MCF 10A (cell line): ENCODE measurements at regions of chr12 and their contacts with region 1.

Region 1: DNA sequence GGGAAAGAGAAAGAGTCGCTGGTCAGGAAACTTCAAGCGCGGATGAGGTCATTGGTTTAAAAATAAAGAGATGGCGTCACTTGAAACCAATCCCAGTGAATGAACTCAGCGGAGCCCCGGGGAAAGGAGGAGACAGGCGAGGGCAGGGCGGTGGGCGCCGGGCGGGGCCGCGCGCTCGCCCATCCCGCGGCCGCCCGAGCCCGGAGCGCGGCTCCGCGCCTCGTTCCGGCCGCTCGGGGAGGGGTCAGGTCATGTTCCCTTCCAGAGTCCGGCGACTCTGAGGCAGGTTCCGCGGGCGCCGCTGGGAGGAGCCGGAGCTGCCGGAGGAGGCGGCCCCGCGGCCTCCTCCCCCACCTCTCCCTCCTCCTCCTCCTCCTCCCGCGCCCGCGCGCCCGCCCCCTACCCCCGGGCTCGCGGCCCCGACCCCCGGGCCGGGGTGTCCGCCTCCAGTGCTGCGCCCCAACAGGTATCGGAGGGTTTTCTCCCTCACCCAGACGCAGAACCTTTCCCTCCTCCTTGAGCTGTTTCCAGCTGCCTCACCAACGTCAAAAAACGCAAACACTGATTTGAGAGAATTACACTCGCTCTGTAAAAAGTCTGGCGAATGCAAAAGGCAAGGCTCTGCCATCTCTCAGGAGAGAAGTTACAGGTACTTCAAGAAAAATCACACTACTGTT is at the start of gene DUSP16:
- DNase-seq: peak; percentile 94
- H3K4me3 Mint-ChIP-seq: peak within 1 kb of the TSS; percentile 69
- H3K27ac Mint-ChIP-seq: peak within 1 kb of the TSS; percentile 95
- H3K4me1 Mint-ChIP-seq: peaks cover 28% of the 10 kb centered on the region
- H3K27me3 Mint-ChIP-seq: no peaks in the 10 kb centered on the region
- CTCF ChIP-seq: no peak
- total RNA-seq, gene DUSP16: 18.9 and 20.7 TPM in 2 replicates

Region 2: DNA sequence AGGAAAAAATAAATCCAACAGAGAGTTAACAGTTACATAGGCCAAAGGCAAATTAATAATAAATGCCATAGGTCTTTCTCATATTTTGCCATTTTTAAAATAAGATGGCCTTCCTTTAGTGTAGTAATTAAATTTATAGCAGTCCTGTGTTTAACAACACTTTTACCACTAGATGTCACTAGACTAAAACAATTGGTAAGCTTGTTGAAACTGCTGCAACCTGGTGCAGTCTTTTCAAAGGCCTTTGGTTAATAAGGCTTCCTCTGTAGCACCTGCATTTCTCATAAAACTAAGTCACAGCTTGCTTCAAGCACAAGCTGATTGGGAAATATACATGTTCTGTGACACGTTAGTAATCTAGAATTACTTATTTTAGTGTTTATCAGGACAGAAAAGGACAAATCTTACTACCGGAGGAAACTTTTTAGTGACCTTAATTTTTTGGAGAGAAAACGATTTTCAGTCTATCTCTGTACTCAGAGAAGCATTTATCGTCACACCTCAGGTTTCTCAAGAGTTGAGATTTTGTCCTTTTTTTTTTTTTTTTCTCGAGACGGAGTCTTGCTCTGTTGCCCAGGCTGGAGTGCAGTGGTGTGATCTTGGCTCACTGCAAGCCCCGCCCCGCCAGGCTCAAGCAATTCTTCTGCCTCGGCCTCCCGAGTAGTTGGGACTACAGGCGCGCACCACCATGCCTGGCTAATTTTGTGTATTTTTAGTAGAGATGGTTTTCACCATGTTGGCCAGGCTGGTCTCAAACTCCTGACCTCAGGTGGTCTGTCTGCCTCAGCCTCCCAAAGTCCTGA is 185.9 kb before region 1 on chr12:
- CTCF ChIA-PET with region 1: interaction called, 20 read pairs
- POLR2A ChIA-PET with region 1: interaction called, 14 read pairs
- intact Hi-C with region 1: loop called (anchors 1 kb)
- DNase-seq: peak; percentile 76
- H3K4me3 Mint-ChIP-seq: no peak overlapping the region
- H3K27ac Mint-ChIP-seq: no peak overlapping the region
- H3K4me1 Mint-ChIP-seq: no peaks in the 10 kb centered on the region
- H3K27me3 Mint-ChIP-seq: no peaks in the 10 kb centered on the region
- CTCF ChIP-seq: peak; percentile 57

Region 3: DNA sequence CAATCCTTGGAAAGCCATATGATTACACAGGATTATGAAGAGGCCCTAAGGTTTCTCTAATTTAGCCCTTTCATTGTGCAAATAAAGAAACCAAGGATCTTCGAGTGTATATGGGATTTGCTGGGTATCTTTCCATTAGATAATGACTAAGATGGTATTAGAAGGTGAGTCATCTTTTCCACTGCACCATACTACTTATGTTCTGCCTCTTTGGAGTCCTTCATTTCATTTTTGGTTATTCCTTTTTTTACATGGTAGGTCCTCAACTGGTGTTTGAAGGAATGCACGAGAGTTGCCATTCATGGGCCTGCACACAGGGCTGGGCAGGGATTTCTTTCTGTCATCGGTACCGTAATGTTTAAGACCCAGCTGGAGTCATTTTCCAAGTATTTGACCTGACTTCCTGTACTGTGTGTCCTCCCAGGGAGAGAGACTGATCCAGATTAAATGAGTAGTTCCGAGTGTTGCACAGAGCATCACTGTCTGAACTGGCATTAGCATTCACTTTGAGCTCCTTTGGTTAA is 120.1 kb before region 1 on chr12:
- CTCF ChIA-PET with region 1: interaction called, 3 read pairs
- POLR2A ChIA-PET with region 1: interaction called, 10 read pairs
- intact Hi-C with region 1: no loop called
- DNase-seq: no peak
- H3K4me3 Mint-ChIP-seq: no peak overlapping the region
- H3K27ac Mint-ChIP-seq: no peak overlapping the region
- H3K4me1 Mint-ChIP-seq: peaks cover 23% of the 10 kb centered on the region
- H3K27me3 Mint-ChIP-seq: no peaks in the 10 kb centered on the region
- CTCF ChIP-seq: no peak

Region 4: GRCh38 chr12:12611512-12612306 is 49.0 kb after region 1 on chr12 and contains the start of gene CREBL2:
- CTCF ChIA-PET with region 1: interaction called, 12 read pairs
- POLR2A ChIA-PET with region 1: interaction called, 10 read pairs
- intact Hi-C with region 1: loop called (anchors 2 kb)
- DNase-seq: peak; percentile 92
- H3K4me3 Mint-ChIP-seq: peak within 1 kb of the TSS; percentile 95
- H3K27ac Mint-ChIP-seq: peak within 1 kb of the TSS; percentile 98
- H3K4me1 Mint-ChIP-seq: peaks cover 26% of the 10 kb centered on the region
- H3K27me3 Mint-ChIP-seq: no peaks in the 10 kb centered on the region
- CTCF ChIP-seq: no peak
- total RNA-seq, gene CREBL2: 17.4 and 22.5 TPM in 2 replicates

Region 5: GRCh38 chr12:12661086-12661485 is 98.4 kb after region 1 on chr12:
- CTCF ChIA-PET with region 1: interaction called, 3 read pairs
- POLR2A ChIA-PET with region 1: interaction called, 6 read pairs
- intact Hi-C with region 1: loop called (anchors 2 kb)
- DNase-seq: peak; percentile 81
- H3K4me3 Mint-ChIP-seq: peak overlapping the region; percentile 46
- H3K27ac Mint-ChIP-seq: peak overlapping the region; percentile 51
- H3K4me1 Mint-ChIP-seq: peaks cover 24% of the 10 kb centered on the region
- H3K27me3 Mint-ChIP-seq: no peaks in the 10 kb centered on the region
- CTCF ChIP-seq: no peak

Region 6: DNA sequence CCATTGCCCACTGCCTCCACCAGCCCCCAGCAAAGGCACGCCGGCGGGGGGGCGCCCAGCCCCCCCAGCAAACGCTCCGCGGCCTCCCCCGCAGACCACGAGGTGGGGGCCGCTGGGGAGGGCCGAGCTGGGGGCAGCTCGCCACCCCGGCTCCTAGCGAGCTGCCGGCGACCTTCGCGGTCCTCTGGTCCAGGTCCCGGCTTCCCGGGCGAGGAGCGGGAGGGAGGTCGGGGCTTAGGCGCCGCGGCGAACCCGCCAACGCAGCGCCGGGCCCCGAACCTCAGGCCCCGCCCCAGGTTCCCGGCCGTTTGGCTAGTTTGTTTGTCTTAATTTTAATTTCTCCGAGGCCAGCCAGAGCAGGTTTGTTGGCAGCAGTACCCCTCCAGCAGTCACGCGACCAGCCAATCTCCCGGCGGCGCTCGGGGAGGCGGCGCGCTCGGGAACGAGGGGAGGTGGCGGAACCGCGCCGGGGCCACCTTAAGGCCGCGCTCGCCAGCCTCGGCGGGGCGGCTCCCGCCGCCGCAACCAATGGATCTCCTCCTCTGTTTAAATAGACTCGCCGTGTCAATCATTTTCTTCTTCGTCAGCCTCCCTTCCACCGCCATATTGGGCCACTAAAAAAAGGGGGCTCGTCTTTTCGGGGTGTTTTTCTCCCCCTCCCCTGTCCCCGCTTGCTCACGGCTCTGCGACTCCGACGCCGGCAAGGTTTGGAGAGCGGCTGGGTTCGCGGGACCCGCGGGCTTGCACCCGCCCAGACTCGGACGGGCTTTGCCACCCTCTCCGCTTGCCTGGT is 154.3 kb after region 1 on chr12 and contains the start of gene CDKN1B:
- CTCF ChIA-PET with region 1: interaction called, 3 read pairs
- POLR2A ChIA-PET with region 1: interaction called, 41 read pairs
- intact Hi-C with region 1: no loop called
- DNase-seq: peak; percentile 96
- H3K4me3 Mint-ChIP-seq: peak within 1 kb of the TSS; percentile 98
- H3K27ac Mint-ChIP-seq: peak within 1 kb of the TSS; percentile 99
- H3K4me1 Mint-ChIP-seq: peaks cover 29% of the 10 kb centered on the region
- H3K27me3 Mint-ChIP-seq: no peaks in the 10 kb centered on the region
- CTCF ChIP-seq: no peak
- total RNA-seq, gene CDKN1B: 33.9 and 41.6 TPM in 2 replicates